PC-3 (cell line): ENCODE measurements at regions of chr2 and their contacts with region 1.

Region 1: DNA sequence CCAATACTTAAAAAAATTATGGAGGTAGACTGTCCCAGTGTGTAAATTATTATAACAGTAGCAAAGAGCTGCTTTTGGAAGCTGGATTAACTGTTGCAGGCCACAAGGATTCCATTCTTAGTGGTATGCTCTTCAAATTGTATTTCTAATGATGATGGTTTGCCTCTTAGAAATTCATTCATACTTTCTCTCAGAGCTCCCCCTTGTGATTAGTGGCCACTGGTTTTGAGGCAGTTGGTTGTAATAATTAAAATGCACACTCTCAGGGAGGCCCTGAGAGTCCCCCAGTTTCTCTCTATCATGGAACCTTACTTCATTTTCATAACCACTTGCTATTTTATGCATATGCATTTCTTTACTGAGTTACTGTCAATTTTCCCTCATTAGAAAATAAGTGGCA is 122.5 kb downstream of the PLA2R1 start:
- DNase-seq: peak; percentile 52
- ATAC-seq: peak; percentile 79
- H3K4me3 ChIP-seq: no peak overlapping the region
- H3K27ac ChIP-seq: no peak overlapping the region
- H3K4me1 ChIP-seq: peaks cover 7% of the 10 kb centered on the region; the same call in 1 of the 2 replicates
- H3K27me3 ChIP-seq: no peaks in the 10 kb centered on the region
- CTCF ChIP-seq: peak; percentile 75

Region 2: GRCh38 chr2:159573846-159574606 is 365.9 kb before region 1 on chr2:
- CTCF ChIA-PET with region 1: no interaction called
- POLR2A ChIA-PET with region 1: no interaction called
- intact Hi-C with region 1: no loop called
- DNase-seq: no peak
- ATAC-seq: no peak
- H3K4me3 ChIP-seq: no peak overlapping the region
- H3K27ac ChIP-seq: no peak overlapping the region
- H3K4me1 ChIP-seq: no peaks in the 10 kb centered on the region
- H3K27me3 ChIP-seq: no peaks in the 10 kb centered on the region
- CTCF ChIP-seq: no peak

Region 3: DNA sequence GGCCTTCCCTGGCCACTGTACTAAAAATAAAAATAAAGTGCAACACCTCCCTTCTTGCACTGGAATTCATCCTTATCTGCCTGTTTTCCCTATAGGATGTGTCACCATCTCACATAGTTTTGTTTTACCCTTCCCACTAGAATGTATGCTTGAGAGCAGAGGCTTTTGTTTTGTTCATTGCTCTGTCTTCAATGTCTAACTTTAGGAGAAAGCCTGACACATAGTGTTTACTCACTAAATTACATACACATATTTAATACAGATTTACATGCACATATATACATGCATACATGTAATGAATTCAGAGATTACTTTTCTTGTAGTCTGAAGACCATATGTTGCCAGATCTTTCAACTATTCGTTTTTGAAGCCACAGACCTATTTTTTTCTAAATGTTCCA is 164.9 kb before region 1 on chr2:
- CTCF ChIA-PET with region 1: no interaction called
- POLR2A ChIA-PET with region 1: no interaction called
- intact Hi-C with region 1: loop called (anchors 5 kb)
- DNase-seq: no peak
- ATAC-seq: peak; percentile 35; the same call in 1 of the 2 replicates
- H3K4me3 ChIP-seq: no peak overlapping the region
- H3K27ac ChIP-seq: no peak overlapping the region
- H3K4me1 ChIP-seq: no peaks in the 10 kb centered on the region
- H3K27me3 ChIP-seq: no peaks in the 10 kb centered on the region
- CTCF ChIP-seq: 0 out of 2 replicates have a peak, but pooled peaks have one; percentile 10

Region 4: DNA sequence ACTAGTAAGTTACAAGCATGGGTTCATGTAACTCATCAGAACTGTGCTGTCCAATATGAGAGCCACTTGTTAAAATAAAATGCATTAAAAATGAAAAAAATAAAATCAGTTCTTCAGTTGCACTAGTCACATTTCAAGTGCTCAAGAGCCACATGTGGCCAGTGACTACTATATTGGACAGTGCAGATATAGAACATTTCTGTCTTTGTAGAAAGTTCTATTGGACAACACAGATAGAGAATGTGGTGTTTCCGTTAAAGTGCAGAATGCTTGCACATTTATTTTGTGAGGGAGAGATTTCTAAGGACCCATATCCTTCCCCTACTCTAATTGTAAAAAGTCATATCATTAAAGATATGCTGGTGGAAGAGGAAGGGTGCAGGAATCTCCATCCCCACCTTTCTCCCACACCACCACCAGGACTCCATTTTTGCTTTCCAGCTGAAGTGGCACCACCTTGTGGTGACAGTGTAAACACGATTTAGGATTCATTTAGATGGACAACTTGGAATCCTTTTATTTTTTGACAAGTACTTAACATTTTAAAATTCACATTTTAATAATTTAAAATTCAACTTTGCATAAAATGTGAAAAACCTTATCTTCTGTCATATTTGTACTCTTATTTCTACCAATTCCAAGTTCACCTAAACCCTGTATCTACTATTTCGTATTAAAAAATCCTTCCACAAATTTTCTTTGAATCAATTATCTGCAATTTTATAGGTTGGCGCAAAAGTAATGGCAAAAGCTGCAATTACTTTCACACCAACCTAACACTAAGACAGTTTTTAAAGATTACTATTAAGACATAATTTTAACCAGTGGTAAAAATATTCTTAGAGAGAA is 132.5 kb before region 1 on chr2:
- CTCF ChIA-PET with region 1: no interaction called
- POLR2A ChIA-PET with region 1: no interaction called
- intact Hi-C with region 1: loop called (anchors 1 kb)
- DNase-seq: peak; percentile 76
- ATAC-seq: peak; percentile 71
- H3K4me3 ChIP-seq: no peak overlapping the region
- H3K27ac ChIP-seq: no peak overlapping the region
- H3K4me1 ChIP-seq: no peaks in the 10 kb centered on the region
- H3K27me3 ChIP-seq: no peaks in the 10 kb centered on the region
- CTCF ChIP-seq: peak; percentile 87

Region 5: GRCh38 chr2:161886248-161886647 is 1946.3 kb after region 1 on chr2:
- CTCF ChIA-PET with region 1: no interaction called
- POLR2A ChIA-PET with region 1: interaction called, 11 read pairs
- intact Hi-C with region 1: no loop called
- DNase-seq: no peak
- ATAC-seq: no peak
- H3K4me3 ChIP-seq: no peak overlapping the region
- H3K27ac ChIP-seq: no peak overlapping the region
- H3K4me1 ChIP-seq: no peaks in the 10 kb centered on the region
- H3K27me3 ChIP-seq: no peaks in the 10 kb centered on the region
- CTCF ChIP-seq: no peak